ENCODE measurements at regions of chr11 and their contacts with region 1.

Region 1: DNA sequence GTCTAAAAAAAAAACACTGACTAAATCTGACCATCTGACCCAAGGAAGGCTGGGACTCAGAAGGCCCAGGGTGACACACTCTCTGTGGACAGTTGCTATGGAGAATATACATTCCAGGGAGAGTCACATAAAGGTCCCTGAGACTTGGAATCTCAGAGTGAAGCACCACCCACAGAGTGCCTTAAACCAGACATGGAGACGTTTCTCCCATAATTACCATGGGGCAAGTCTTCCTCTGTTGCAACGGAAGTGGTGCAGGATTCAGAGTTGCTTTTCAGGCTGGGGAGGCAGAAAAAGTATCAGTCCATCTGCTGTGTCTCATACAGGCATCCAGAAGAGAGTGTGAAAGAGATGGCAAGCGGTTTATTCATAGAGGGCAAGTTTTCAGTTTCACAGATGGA is 58.7 kb upstream of the SLN start:
- H3K4me3 ChIP-seq: no peak overlapping the region
- H3K27ac ChIP-seq: no peak overlapping the region
- H3K4me1 ChIP-seq: no peaks in the 10 kb centered on the region
- CTCF ChIP-seq: no peak

Region 2: DNA sequence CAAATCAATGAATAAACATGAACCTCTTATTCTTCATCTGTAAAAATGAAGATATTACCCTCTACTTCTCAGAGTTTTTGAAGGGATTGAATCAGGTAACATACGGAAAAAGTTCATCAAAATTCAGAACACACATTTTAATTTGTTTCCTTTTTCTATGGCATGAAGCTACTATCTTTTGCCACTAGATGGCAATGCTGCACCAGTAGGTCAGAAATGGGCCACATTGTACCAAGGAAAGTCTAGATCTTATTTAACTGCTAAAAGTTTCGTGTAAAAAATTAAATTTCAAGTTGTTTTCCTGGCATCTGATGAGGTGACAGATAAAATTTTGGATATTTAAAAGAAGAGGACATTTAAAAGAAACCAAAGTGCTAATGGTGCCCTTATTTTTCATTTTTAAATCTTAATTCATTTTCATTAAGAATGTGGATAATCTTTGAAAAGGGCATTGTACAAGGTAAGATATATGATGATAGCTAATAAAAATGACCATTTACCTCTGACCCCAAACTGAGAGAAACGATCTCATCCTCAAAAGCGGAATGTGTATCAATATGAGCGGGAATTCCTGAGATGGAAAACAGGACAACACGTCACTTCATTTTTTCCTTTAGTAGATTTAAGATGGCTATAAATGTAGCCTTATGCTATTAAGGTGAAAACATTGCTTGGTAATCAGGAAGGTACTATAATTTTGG is 221.1 kb before region 1 on chr11:
- CTCF ChIA-PET with region 1: interaction called, 11 read pairs
- POLR2A ChIA-PET with region 1: no interaction called
- H3K4me3 ChIP-seq: no peak overlapping the region
- H3K27ac ChIP-seq: no peak overlapping the region
- H3K4me1 ChIP-seq: no peaks in the 10 kb centered on the region
- CTCF ChIP-seq: no peak

Region 3: DNA sequence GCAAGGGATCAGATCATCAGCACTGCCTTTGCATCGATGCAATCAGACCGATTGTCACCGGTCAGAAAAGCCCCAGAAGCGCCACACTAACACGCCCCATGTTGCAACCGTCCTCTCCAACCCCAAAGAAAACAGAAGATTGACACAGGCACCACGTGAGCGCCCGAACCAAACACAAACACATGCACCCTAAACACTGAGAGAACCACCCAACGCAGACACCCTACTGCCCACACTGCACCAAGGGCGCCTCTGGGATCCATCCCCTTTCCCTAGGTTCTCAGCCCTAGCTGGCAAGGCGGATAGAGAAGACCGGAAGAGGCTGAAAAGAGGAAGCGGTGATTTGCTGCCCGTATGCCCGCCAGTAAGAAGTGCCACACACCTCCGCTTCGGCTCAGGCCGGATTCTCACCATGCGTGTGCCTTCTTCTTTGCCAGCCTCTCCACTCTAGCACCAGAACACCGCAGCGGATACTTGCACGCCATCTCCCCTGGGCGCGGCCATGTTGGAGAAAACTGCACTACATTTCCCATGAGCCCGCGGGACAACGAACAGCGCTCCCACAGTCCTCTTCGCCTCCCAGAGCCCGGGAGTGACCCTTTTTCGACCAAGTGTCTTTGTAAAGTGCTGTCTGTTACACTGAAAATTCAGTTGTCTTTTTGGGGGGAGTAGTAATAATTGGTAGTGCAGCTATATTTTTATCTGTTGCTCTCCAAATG is 205.2 kb before region 1 on chr11 and contains the start of gene ALKBH8:
- CTCF ChIA-PET with region 1: interaction called, 39 read pairs
- POLR2A ChIA-PET with region 1: no interaction called
- H3K4me3 ChIP-seq: peak within 1 kb of the TSS; percentile 94
- H3K27ac ChIP-seq: peak within 1 kb of the TSS; percentile 30; the same call in 1 of the 2 replicates
- H3K4me1 ChIP-seq: no peaks in the 10 kb centered on the region
- CTCF ChIP-seq: no peak

Region 4: GRCh38 chr11:107741044-107741823 is 29.3 kb before region 1 on chr11:
- CTCF ChIA-PET with region 1: interaction called, 21 read pairs
- POLR2A ChIA-PET with region 1: no interaction called
- H3K4me3 ChIP-seq: no peak overlapping the region
- H3K27ac ChIP-seq: no peak overlapping the region
- H3K4me1 ChIP-seq: no peaks in the 10 kb centered on the region
- CTCF ChIP-seq: no peak

Region 5: GRCh38 chr11:107747622-107748021 is 22.9 kb before region 1 on chr11:
- CTCF ChIA-PET with region 1: interaction called, 11 read pairs
- POLR2A ChIA-PET with region 1: no interaction called
- H3K4me3 ChIP-seq: no peak overlapping the region
- H3K27ac ChIP-seq: no peak overlapping the region
- H3K4me1 ChIP-seq: no peaks in the 10 kb centered on the region
- CTCF ChIP-seq: no peak

Region 6: DNA sequence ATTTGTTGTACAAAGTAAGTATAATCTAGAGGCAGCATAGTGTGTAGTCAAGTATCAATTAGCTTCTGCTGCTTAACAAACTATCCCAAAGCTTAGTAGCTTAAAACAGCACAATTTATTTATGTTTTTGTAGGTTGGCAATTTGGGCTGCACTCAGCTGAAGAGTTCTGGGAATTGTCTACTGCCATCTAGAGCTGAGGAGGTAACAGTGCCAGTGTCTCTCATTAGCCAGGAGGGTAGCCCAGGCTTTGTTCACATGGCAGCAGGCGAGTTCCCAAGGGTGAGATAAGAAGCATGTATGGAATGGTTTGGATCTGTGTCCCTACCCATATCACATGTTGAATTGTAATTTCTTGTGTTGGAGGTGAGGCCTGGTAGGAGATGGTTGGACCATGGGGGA is 12.9 kb before region 1 on chr11:
- CTCF ChIA-PET with region 1: interaction called, 14 read pairs
- POLR2A ChIA-PET with region 1: no interaction called
- H3K4me3 ChIP-seq: no peak overlapping the region
- H3K27ac ChIP-seq: no peak overlapping the region
- H3K4me1 ChIP-seq: no peaks in the 10 kb centered on the region
- CTCF ChIP-seq: no peak

Region 7: GRCh38 chr11:107799218-107799859 is 28.8 kb after region 1 on chr11:
- CTCF ChIA-PET with region 1: interaction called, 13 read pairs
- POLR2A ChIA-PET with region 1: no interaction called
- H3K4me3 ChIP-seq: no peak overlapping the region
- H3K27ac ChIP-seq: no peak overlapping the region
- H3K4me1 ChIP-seq: no peaks in the 10 kb centered on the region
- CTCF ChIP-seq: peak; percentile 31; the same call in 1 of the 2 replicates